Activated naive CD4-positive, alpha-beta T cell treated with anti-CD3 and anti-CD28 coated beads, Interleukin-2, amount 10 ng/mL, durations not matched to agents 7 days and 5 days (primary cell): ENCODE measurements at regions of chr4 and their contacts with region 1.

Region 1: GRCh38 chr4:101169044-101170014 is 178.0 kb downstream of the PPP3CA start:
- DNase-seq: peak; percentile 73
- H3K4me3 Mint-ChIP-seq: no peak overlapping the region
- H3K27ac Mint-ChIP-seq: no peak overlapping the region
- H3K4me1 Mint-ChIP-seq: no peaks in the 10 kb centered on the region
- H3K27me3 Mint-ChIP-seq: no peaks in the 10 kb centered on the region

Region 2: GRCh38 chr4:101274888-101275752 is 105.8 kb after region 1 on chr4:
- CTCF ChIA-PET with region 1: no interaction called
- DNase-seq: no peak
- H3K4me3 Mint-ChIP-seq: no peak overlapping the region
- H3K27ac Mint-ChIP-seq: no peak overlapping the region
- H3K4me1 Mint-ChIP-seq: peaks cover 17% of the 10 kb centered on the region
- H3K27me3 Mint-ChIP-seq: no peaks in the 10 kb centered on the region

Region 3: GRCh38 chr4:101596781-101597552 is 427.6 kb after region 1 on chr4:
- CTCF ChIA-PET with region 1: interaction called, 18 read pairs
- DNase-seq: peak; percentile 52
- H3K4me3 Mint-ChIP-seq: no peak overlapping the region
- H3K27ac Mint-ChIP-seq: no peak overlapping the region
- H3K4me1 Mint-ChIP-seq: no peaks in the 10 kb centered on the region
- H3K27me3 Mint-ChIP-seq: no peaks in the 10 kb centered on the region

Region 4: GRCh38 chr4:101730291-101731117 is 561.2 kb after region 1 on chr4:
- CTCF ChIA-PET with region 1: interaction called, 50 read pairs
- DNase-seq: peak; percentile 63
- H3K4me3 Mint-ChIP-seq: no peak overlapping the region
- H3K27ac Mint-ChIP-seq: no peak overlapping the region
- H3K4me1 Mint-ChIP-seq: no peaks in the 10 kb centered on the region
- H3K27me3 Mint-ChIP-seq: peaks cover 4% of the 10 kb centered on the region